ENCODE measurements at regions of chr1 and their contacts with region 1.

Region 1: GRCh38 chr1:169106095-169106920 is at the start of gene ATP1B1:
- DNase-seq: peak; percentile 93

Region 2: GRCh38 chr1:168439456-168440375 is 666.6 kb before region 1 on chr1:
- in situ Hi-C with region 1: loop called (anchors 25 kb)
- DNase-seq: peak; percentile 93

Region 3: GRCh38 chr1:169443923-169444322 is 337.6 kb after region 1 on chr1:
- in situ Hi-C with region 1: no loop called
- DNase-seq: peak; percentile 7

Measured in KBM-7 (cell line).